ENCODE measurements at regions of chr22 and their contacts with region 1.

Region 1: GRCh38 chr22:37696657-37697537 is at the start of gene TRIOBP:
- DNase-seq: peak; percentile 89 to 90
- ATAC-seq: peak; percentile 98 to 100 (median 99)
- H3K4me3 ChIP-seq: no peak within 1 kb of the TSS
- H3K4me3 Mint-ChIP-seq: peak within 1 kb of the TSS; percentile 56
- H3K27ac ChIP-seq: no peak within 1 kb of the TSS
- H3K27ac Mint-ChIP-seq: peak within 1 kb of the TSS; percentile 54 to 85
- H3K4me1 ChIP-seq: peaks cover 26% of the 10 kb centered on the region
- H3K4me1 Mint-ChIP-seq: peaks cover 25 to 28% of the 10 kb centered on the region in 2 donors
- H3K27me3 ChIP-seq: no peaks in the 10 kb centered on the region
- H3K27me3 Mint-ChIP-seq: no peaks in the 10 kb centered on the region
- CTCF ChIP-seq: peak; percentile 45
- total RNA-seq, gene TRIOBP: 25.1 to 38.5 (median 25.8) TPM

Region 2: GRCh38 chr22:37498289-37498909 is 198.5 kb before region 1 on chr22:
- intact Hi-C with region 1: no loop called
- DNase-seq: peak; percentile 52 to 86
- ATAC-seq: peak; percentile 56 to 97 (median 95)
- H3K4me3 ChIP-seq: no peak overlapping the region
- H3K4me3 Mint-ChIP-seq: no peak overlapping the region
- H3K27ac ChIP-seq: no peak overlapping the region
- H3K27ac Mint-ChIP-seq: no peak overlapping the region
- H3K4me1 ChIP-seq: peaks cover 20% of the 10 kb centered on the region
- H3K4me1 Mint-ChIP-seq: peaks cover 5 to 13% of the 10 kb centered on the region in 2 donors
- H3K27me3 ChIP-seq: no peaks in the 10 kb centered on the region
- H3K27me3 Mint-ChIP-seq: peaks cover 0 to 13% of the 10 kb centered on the region in 2 donors
- CTCF ChIP-seq: peak; percentile 64

Region 3: DNA sequence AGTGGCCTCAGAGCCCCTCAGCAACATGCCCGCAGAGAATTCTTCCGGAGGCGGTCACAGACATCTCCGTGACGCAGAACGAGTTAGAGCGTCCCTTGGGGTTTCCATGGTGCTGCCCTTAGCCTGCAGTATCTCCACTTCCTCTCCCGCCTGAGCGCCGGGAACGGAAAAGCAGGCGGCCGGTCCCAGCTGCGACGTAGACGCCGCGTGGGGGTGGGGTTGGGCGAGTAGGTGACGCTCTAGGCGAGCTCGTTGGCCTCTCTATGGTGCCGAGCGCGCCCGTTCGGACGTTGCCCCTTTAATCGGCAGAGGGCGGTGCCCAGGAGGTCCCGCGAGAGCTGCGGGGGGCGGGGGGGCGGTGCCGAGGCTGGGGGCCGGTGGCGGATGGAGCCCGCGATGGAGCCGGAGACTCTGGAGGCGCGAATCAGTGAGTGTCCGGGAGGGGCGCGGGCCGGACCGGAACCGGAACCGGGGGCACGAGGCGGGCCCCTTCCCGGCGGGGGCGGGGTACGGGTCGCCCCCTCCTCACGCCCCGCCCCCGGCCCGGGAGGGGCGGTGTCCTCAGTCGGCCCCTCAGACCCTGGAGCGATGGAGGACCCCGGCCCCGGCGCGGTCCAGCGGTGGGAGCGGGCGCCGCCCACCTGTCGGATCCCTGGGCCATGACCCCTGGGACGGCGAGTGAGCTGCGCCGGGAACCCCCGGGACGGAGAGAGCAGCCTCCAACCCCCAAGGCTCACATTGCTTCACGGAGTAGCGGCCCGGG is 88.2 kb before region 1 on chr22 and contains the start of gene GGA1:
- intact Hi-C with region 1: loop called (anchors 5 kb)
- DNase-seq: peak; percentile 92 to 99
- ATAC-seq: peak; percentile 77 to 94 (median 81)
- H3K4me3 ChIP-seq: peak within 1 kb of the TSS; percentile 84
- H3K4me3 Mint-ChIP-seq: peak within 1 kb of the TSS; percentile 98
- H3K27ac ChIP-seq: peak within 1 kb of the TSS; percentile 94
- H3K27ac Mint-ChIP-seq: peak within 1 kb of the TSS; percentile 98 to 99
- H3K4me1 ChIP-seq: peaks cover 61% of the 10 kb centered on the region
- H3K4me1 Mint-ChIP-seq: peaks cover 37 to 62% of the 10 kb centered on the region in 2 donors
- H3K27me3 ChIP-seq: no peaks in the 10 kb centered on the region
- H3K27me3 Mint-ChIP-seq: no peaks in the 10 kb centered on the region
- CTCF ChIP-seq: no peak
- total RNA-seq, gene GGA1: 69.3 to 87.8 (median 80.2) TPM

Region 4: GRCh38 chr22:37658133-37659065 is 38.5 kb before region 1 on chr22 and contains the start of gene PDXP:
- intact Hi-C with region 1: loop called (anchors 1 kb)
- DNase-seq: peak; percentile 97 to 99
- ATAC-seq: peak; percentile 87 to 97 (median 89)
- H3K4me3 ChIP-seq: peak within 1 kb of the TSS; percentile 48
- H3K4me3 Mint-ChIP-seq: peak within 1 kb of the TSS; percentile 86
- H3K27ac ChIP-seq: peak within 1 kb of the TSS; percentile 64
- H3K27ac Mint-ChIP-seq: peak within 1 kb of the TSS; percentile 92 to 95
- H3K4me1 ChIP-seq: peaks cover 42% of the 10 kb centered on the region
- H3K4me1 Mint-ChIP-seq: peaks cover 37 to 47% of the 10 kb centered on the region in 2 donors
- H3K27me3 ChIP-seq: no peaks in the 10 kb centered on the region
- H3K27me3 Mint-ChIP-seq: no peaks in the 10 kb centered on the region
- CTCF ChIP-seq: no peak
- total RNA-seq, gene PDXP: 8.3 to 14.2 (median 13.4) TPM

Region 5: DNA sequence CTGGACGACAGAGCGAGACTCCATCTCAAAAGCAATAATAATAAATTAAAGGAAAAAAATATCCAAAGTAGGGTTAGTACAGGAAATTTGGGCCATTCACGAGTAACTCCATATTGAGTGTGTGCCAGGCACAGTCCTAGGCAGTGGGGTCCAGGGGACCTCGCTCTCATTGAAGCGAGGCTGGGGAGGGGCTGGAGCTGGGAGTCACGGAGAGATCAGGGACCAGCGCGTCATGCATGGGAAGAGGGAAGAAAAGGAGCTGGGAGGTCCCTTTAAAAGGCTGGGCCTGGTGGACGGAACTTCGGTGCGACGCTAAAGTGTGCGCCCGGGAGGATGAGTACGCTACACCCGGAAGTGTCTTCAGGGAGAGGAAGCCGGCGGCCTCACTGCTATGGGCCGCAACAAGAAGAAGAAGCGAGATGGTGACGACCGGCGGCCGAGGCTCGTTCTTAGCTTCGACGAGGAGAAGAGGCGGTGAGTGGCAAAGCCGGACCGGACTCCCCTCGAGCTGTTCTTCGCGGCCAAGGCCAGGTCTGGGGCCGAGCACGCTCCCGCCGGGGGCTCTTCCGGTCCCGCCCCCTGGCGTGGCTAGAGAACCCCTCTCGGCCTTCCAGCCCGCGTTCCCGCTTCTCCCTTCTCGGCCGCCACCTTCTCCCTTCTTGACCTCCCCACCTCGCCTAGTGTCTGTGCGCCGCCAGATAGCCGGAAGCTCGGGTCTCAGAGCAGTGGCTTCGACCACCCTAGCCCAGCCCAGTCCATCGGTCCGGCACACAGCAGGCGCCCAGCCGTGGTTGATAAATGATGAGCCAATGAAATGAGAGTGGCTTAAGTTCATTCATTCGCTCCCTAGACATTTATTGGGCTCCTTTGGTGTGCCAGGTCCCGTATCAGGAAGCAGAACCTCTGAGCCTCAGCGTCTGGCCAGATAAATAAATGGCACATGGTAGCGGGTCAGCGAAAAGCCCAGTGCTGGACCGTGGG is 10.6 kb before region 1 on chr22 and contains the start of gene NOL12:
- intact Hi-C with region 1: loop called (anchors 1 kb)
- DNase-seq: peak; percentile 78 to 90
- ATAC-seq: peak; percentile 91 to 93 (median 92)
- H3K4me3 ChIP-seq: peak within 1 kb of the TSS; percentile 89
- H3K4me3 Mint-ChIP-seq: peak within 1 kb of the TSS; percentile 98
- H3K27ac ChIP-seq: peak within 1 kb of the TSS; percentile 60
- H3K27ac Mint-ChIP-seq: peak within 1 kb of the TSS; percentile 91 to 97
- H3K4me1 ChIP-seq: peaks cover 27% of the 10 kb centered on the region
- H3K4me1 Mint-ChIP-seq: peaks cover 18 to 32% of the 10 kb centered on the region in 2 donors
- H3K27me3 ChIP-seq: no peaks in the 10 kb centered on the region
- H3K27me3 Mint-ChIP-seq: no peaks in the 10 kb centered on the region
- CTCF ChIP-seq: no peak
- total RNA-seq, gene NOL12: 28.0 to 45.1 (median 39.0) TPM